Caco-2 (cell line): ENCODE measurements at regions of chr15 and their contacts with region 1.

Region 1: DNA sequence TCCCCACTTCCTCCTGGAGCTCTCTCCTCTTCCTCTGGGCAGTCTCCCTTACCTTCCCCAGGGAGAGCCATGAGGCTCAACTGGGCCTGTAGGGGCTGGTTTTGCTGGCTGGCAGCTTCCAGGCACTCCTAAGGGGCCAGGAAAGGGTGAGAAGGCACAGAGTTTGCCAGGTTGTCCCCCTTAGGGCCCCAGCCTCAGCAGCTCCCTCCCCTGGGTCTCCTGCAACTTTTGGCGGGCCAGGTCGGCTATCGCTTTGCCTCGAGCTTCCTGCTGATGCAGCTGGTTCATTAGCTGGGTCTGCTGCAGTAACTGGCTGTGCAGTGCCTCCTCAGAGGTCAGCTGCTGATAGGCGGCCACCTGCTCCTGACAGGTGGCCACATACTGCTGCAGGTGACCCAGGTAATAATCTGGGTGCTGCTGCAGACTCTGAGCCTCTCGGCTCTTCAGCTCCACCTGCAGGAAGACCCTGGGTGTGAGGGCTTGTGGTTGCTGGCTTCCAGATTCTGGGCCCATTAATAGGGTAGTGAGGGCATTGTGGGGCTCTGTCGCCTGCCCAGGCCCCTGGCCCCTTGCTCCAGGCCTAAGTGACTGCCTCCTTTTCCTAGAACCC is 29.7 kb upstream of the OR4F6 start:
- DNase-seq: peak; percentile 50 to 57
- H3K4me3 ChIP-seq: no peak overlapping the region
- H3K4me3 Mint-ChIP-seq: no peak overlapping the region
- H3K27ac Mint-ChIP-seq: no peak overlapping the region
- H3K4me1 ChIP-seq: no peaks in the 10 kb centered on the region
- H3K4me1 Mint-ChIP-seq: no peaks in the 10 kb centered on the region
- H3K27me3 ChIP-seq: no peaks in the 10 kb centered on the region
- H3K27me3 Mint-ChIP-seq: no peaks in the 10 kb centered on the region
- CTCF ChIP-seq: peak; percentile 34 to 56

Region 2: GRCh38 chr15:101664303-101664913 is 109.2 kb before region 1 on chr15:
- CTCF ChIA-PET with region 1: no interaction called
- POLR2A ChIA-PET with region 1: no interaction called
- intact Hi-C with region 1: loop called (anchors 2 kb)
- DNase-seq: peak in 1 of 2 experiments; percentile 41
- H3K4me3 ChIP-seq: no peak overlapping the region
- H3K4me3 Mint-ChIP-seq: no peak overlapping the region
- H3K27ac Mint-ChIP-seq: no peak overlapping the region
- H3K4me1 ChIP-seq: no peaks in the 10 kb centered on the region
- H3K4me1 Mint-ChIP-seq: peaks cover 10% of the 10 kb centered on the region
- H3K27me3 ChIP-seq: no peaks in the 10 kb centered on the region
- H3K27me3 Mint-ChIP-seq: no peaks in the 10 kb centered on the region
- CTCF ChIP-seq: peak; percentile 35 to 70